OCI-LY7 (cell line): ENCODE measurements at regions of chr21 and their contacts with region 1.

Region 1: DNA sequence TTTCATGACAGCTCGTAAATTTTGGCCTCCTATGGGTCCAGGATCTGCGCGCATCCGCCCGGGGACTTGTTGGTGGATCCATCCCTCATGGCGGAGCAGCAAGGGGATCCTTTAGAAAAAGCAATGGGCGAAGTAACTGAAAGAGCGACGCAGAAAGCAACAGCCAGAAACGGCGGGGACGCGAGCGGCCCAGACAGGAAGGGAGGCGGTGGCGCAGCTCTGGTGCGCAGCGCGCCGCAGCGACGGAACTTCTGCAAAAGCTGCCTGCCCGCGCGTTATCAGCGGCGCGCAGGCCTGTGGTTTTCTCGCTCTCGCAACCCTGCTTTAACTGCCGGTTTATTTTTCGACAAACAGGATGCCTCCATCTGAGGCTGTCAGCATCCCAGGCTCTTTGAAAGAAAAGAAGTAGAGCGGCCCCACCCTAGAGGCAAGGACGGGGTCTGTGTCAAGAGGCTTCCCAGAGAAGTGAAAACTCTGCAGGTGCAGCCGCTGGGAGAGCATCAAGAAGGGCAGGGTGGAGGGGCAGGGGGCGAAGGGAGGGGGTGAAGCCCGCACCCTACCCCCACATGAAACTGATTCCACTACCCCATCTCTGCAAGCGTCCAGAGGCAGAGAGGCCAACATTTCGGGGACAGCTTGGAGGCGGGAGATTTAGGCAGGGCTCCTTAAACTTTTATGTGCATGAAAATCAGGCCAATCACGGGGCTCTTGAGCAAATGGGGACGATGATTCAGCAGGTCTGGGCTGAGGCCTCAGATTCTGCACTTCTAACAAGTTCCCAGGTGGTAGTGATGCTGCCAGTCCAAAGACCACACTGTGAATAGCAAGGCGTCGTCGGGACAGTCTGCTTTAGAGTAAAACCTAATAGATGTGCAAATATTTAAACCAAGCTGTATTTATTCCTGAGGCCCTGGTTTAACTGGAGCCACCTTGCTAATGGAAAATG is 22.2 kb downstream of the RUNX1 start:
- DNase-seq: peak; percentile 93
- H3K4me3 ChIP-seq: peak overlapping the region; percentile 65
- H3K27ac ChIP-seq: peak overlapping the region; percentile 97
- H3K4me1 ChIP-seq: peaks cover 69% of the 10 kb centered on the region
- CTCF ChIP-seq: peak; percentile 21; the same call in 1 of the 2 replicates

Region 2: DNA sequence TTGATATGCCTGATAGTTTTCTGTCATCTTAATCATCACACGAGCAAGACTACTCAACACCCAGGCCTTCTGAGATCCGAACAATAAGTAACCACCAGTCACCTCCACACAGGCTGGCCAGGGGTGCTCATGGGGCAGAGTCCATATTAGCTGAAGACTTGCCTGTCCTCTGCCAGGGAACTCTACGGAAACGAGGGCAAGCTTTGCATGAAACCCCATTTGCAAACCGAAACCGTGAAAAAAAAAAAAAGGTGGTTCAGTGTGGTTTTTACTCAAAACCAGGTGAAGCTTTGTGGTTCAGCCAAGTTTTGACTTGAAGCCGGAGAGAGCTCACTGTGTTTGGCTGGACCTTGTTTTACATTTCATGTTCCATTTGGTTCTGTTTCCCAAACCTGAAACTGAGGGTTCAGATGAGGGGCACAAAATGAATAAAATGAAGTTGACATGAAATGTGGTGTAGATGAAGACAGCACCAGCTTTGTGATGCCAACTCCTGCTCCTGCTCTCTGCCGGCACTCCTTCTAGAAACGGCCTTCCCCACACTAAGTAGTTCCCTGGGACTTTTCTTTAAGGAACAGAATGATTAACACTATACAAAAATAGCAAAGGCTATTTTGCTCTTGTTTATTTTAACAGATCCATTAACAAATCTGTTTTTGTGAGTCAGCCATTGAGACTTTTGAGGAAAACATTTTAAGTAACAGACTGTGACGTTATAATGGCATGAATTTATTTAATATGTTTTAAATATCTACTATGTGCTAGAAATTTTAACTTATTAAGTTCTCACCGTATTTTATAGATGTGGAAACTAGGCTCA is 52.5 kb before region 1 on chr21:
- CTCF ChIA-PET with region 1: no interaction called
- POLR2A ChIA-PET with region 1: interaction called, 4 read pairs
- intact Hi-C with region 1: loop called (anchors 2 kb)
- DNase-seq: peak; percentile 73
- H3K4me3 ChIP-seq: peak overlapping the region; percentile 15
- H3K27ac ChIP-seq: no peak overlapping the region
- H3K4me1 ChIP-seq: peaks cover 25% of the 10 kb centered on the region
- CTCF ChIP-seq: no peak